ENCODE measurements at regions of chr18 and their contacts with region 1.

Region 1: GRCh38 chr18:26383454-26384270 is 157.4 kb downstream of the TAF4B start:
- DNase-seq: no peak
- H3K4me3 ChIP-seq: no peak overlapping the region
- H3K27ac ChIP-seq: no peak overlapping the region
- H3K4me1 ChIP-seq: peaks cover 38% of the 10 kb centered on the region
- H3K27me3 ChIP-seq: no peaks in the 10 kb centered on the region
- CTCF ChIP-seq: peak; percentile 79

Region 2: GRCh38 chr18:26370037-26370436 is 13.6 kb before region 1 on chr18:
- CTCF ChIA-PET with region 1: no interaction called
- POLR2A ChIA-PET with region 1: no interaction called
- intact Hi-C with region 1: no loop called
- DNase-seq: no peak
- H3K4me3 ChIP-seq: no peak overlapping the region
- H3K27ac ChIP-seq: no peak overlapping the region
- H3K4me1 ChIP-seq: no peaks in the 10 kb centered on the region
- H3K27me3 ChIP-seq: no peaks in the 10 kb centered on the region
- CTCF ChIP-seq: no peak

Region 3: DNA sequence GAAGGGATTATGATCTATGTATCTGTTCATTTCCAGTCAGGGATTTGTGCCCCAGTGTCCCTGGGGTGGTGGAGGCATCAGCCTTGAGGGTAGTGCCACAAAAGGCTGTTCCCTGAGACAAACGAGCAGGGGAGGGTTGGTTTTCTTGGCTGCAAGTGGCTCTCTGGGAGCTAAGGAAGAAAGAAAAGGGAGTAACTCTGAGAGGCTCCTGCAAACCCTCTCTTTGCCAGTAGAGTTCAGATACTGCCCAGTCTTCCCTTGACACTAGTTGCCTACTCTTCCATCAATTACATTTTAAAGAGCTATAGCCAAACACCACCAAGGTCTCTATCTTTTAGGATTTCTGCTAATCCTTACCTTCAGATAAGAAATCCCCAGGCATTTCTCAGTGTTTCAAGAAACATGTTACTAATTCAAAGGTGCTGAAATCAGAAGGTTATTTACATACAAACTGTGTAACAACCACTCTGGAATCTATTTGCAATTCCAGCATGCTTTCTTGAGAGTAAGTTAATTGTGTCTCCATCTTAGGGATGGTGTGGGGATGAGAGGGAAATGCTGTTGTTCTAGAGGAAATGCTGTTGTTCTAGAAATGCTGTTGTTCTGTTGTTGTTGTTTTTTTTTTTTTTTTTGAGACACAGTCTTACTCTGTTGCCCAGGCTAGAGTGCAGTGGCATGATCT is 183.4 kb after region 1 on chr18:
- CTCF ChIA-PET with region 1: no interaction called
- POLR2A ChIA-PET with region 1: interaction called, 40 read pairs
- intact Hi-C with region 1: no loop called
- DNase-seq: no peak
- H3K4me3 ChIP-seq: no peak overlapping the region
- H3K27ac ChIP-seq: no peak overlapping the region
- H3K4me1 ChIP-seq: peaks cover 16% of the 10 kb centered on the region; the same call in 1 of the 2 replicates
- H3K27me3 ChIP-seq: no peaks in the 10 kb centered on the region
- CTCF ChIP-seq: no peak

Region 4: GRCh38 chr18:26656944-26657536 is 273.4 kb after region 1 on chr18:
- CTCF ChIA-PET with region 1: no interaction called
- POLR2A ChIA-PET with region 1: no interaction called
- intact Hi-C with region 1: loop called (anchors 5 kb)
- DNase-seq: peak in 1 of 2 experiments; percentile 62
- H3K4me3 ChIP-seq: peak overlapping the region; percentile 70
- H3K27ac ChIP-seq: peak overlapping the region; percentile 52
- H3K4me1 ChIP-seq: peaks cover 16% of the 10 kb centered on the region
- H3K27me3 ChIP-seq: no peaks in the 10 kb centered on the region
- CTCF ChIP-seq: no peak

Measured in PC-9 (cell line).